ENCODE measurements at regions of chr3 and their contacts with region 1.

Region 1: DNA sequence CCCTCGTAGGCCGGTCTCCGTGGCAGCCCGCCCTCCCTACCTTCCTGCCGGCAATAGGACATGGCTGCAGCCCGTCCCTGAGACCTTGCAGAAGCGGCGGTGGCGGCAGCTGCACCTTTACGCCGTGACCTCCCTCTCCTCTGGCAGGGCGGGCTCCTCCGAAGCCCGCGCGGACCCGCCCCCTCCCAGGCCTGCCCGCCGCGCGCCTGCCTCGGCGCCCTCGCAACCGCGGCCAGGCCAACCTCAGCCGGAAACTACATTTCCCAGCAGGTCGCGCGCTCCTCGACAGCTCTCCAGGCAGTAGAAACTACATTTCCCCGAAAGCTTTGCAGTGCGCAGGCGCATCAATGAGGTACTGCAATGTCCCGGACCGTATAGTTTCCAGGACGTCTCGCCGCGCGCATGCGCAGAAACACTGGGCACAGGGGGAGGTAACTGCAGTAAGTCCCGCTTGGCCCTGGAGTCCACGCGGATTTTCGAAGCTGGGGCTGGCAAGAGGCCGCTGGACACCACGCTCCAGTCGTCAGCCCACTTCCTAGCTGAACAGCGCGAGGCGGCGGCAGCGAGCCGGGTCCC is at the starts of genes CHCHD4 and TMEM43:
- DNase-seq: peak; percentile 99
- H3K4me3 Mint-ChIP-seq: peak within 1 kb of the TSS; percentile 86
- H3K27ac Mint-ChIP-seq: peak within 1 kb of the TSS; percentile 86
- H3K4me1 Mint-ChIP-seq: peaks cover 51% of the 10 kb centered on the region
- H3K27me3 Mint-ChIP-seq: no peaks in the 10 kb centered on the region
- total RNA-seq, gene CHCHD4: 17.5 to 19.2 TPM
- total RNA-seq, gene TMEM43: 31.0 to 32.4 TPM

Region 2: DNA sequence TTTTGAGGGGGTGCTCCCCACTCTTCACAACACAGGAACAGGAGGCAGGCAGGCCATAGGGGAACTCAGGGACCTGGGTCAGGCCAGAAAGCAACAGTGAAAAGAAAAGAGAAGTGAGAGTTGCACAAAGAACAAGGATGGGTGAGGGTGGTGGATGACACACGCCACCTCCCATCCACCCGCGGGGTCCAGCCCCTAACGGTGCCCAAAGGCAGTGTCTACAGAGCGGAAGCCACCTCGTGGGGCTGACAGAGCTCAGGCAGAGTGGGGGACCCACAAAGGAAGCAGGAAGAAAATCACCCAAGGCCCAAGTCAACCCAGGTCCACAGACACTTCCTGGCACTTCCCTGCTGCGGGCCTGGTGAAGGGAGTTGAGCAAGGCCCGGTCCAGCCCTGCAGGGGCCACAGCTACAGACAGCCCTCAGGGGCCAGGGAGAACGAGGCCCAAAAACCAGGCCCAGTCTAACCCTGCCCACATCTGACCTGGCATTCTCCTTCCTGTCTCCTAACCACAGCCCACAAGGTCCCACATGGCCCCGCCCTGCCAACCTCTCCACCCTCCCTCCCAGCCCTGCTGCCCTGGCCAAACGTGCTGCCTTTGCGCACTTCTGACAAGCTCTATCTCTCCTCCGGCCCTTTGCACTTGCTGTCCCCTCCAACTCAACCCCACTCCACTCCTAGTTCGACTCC is 710.5 kb before region 1 on chr3:
- CTCF ChIA-PET with region 1: no interaction called
- POLR2A ChIA-PET with region 1: no interaction called
- intact Hi-C with region 1: loop called (anchors 1 kb)
- DNase-seq: peak; percentile 85
- H3K4me3 Mint-ChIP-seq: peak overlapping the region; percentile 67
- H3K27ac Mint-ChIP-seq: peak overlapping the region; percentile 90
- H3K4me1 Mint-ChIP-seq: peaks cover 54% of the 10 kb centered on the region
- H3K27me3 Mint-ChIP-seq: no peaks in the 10 kb centered on the region

Region 3: GRCh38 chr3:14082108-14082657 is 42.5 kb before region 1 on chr3:
- CTCF ChIA-PET with region 1: no interaction called
- POLR2A ChIA-PET with region 1: interaction called, 5 read pairs
- intact Hi-C with region 1: loop called (anchors 1 kb)
- DNase-seq: peak; percentile 45
- H3K4me3 Mint-ChIP-seq: no peak overlapping the region
- H3K27ac Mint-ChIP-seq: peak overlapping the region; percentile 23
- H3K4me1 Mint-ChIP-seq: peaks cover 11% of the 10 kb centered on the region
- H3K27me3 Mint-ChIP-seq: peaks cover 11% of the 10 kb centered on the region

Region 4: DNA sequence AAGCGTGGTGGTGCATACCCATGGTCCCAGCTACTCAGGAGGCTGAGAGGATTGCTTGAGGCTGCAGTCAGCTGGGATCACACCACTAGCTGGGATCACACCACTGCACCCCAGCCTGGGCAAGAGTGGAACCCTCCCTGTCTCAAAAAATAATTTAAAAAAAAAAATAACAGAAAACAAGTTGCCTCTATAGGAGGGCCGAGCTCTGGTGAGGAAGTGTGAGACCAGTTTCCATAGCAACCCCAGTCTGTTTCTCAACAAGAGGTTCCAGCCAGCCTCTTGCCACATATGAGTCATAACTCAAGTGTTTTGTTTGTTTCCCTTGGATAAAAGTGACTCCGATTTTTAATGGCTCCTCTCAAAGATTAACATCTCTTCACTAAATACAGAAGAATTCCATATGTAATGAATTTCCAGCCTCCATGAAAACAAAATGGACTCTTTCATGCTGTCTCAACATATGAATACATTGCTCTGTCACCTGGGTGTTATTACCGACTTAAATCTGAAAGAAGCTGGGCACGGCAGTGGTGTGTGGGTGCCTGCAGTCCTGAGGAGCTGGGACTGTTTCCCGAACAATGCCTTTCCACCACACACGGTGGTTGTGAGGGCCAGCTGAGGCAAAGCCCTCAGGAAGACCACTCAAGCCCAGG is 19.8 kb after region 1 on chr3:
- CTCF ChIA-PET with region 1: interaction called, 21 read pairs
- POLR2A ChIA-PET with region 1: interaction called, 52 read pairs
- intact Hi-C with region 1: loop called (anchors 1 kb)
- DNase-seq: peak; percentile 74
- H3K4me3 Mint-ChIP-seq: peak overlapping the region; percentile 1
- H3K27ac Mint-ChIP-seq: peak overlapping the region; percentile 79
- H3K4me1 Mint-ChIP-seq: peaks cover 57% of the 10 kb centered on the region
- H3K27me3 Mint-ChIP-seq: no peaks in the 10 kb centered on the region

Region 5: DNA sequence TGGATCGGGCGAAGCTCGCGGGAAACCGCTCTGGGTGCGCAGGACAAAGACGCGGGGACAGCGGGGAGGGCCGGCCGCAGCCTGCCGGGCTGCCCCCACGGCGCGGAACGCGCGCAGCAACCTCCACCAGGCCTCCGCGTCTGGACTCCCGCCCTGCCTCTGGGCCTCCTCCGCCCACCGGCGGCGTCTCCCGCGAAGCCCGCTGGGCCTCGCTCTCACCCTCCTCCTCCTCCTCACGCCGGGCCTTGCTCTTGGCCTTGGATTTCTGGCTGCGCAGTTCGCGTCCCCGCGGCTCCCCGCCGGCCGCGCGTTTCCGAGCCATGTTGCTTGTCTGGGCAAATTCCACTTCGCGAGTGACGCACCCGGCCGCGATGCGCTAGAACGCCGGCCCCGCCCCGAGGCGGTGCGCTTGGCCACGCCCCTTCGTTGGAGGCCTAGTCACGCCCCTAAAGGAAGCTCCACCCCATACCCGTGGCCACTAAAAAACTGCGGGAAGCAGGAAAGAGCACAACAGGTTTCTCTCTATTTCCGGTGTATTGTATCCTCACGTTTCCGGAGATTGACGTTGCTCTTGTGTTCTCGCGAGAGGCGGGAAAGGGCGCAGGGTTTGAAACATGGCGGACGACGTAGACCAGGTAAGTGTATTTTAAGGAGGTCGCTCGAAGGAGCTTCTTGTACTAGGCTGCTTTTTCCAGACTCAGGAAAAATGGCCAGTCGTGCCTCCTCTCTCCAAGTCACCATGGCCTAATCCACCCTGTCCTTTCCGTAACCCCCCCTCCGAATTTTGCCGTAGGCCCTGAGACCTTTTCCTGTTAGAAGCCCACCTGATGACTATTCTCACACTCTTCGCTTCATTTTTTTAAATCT is 53.8 kb after region 1 on chr3 and contains the starts of genes LSM3 and XPC:
- CTCF ChIA-PET with region 1: interaction called, 15 read pairs
- POLR2A ChIA-PET with region 1: interaction called, 49 read pairs
- intact Hi-C with region 1: loop called (anchors 1 kb)
- DNase-seq: peak; percentile 98
- H3K4me3 Mint-ChIP-seq: peak within 1 kb of the TSS; percentile 87
- H3K27ac Mint-ChIP-seq: peak within 1 kb of the TSS; percentile 89
- H3K4me1 Mint-ChIP-seq: peaks cover 63% of the 10 kb centered on the region
- H3K27me3 Mint-ChIP-seq: no peaks in the 10 kb centered on the region
- total RNA-seq, gene LSM3: 22.1 to 22.9 TPM
- total RNA-seq, gene XPC: 27.8 to 31.6 TPM

Region 6: DNA sequence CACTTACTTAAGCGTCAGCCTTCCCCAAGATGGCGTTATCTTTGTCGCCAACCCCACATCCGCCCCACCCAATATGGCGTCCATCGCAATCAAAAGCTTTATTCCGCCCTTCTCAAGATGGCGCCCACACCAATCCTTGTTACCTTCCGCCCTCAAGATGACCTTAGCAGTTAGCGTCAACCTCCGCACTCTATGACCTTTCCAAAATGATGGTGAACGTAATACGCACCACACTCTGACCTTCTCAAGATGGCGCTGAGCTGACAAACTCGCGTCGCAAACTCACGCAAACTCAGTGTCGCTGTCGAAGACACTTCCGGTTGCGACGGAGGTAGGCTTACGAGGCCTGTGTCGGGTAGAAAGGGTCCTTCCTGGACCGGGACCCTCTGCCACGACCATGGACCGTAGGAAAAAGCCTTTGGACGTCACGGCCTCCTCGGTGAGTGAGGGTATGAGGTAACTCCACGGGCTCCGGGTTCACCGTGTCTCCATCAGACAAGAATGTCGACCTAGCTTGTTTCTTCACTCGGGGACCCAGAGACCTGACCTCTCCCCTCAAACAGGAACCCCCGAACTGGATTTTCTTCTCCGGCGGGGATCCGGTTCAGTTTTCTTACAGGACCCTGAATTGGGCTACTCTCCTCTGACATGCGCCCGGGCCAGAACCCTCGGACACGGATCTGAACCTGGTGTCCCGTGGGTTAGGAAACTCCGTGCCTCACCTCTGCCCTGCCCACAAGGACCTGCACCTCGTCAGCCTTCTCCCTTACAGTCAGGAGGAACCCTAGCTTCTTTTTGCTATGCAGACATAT is 526.9 kb after region 1 on chr3 and contains the start of gene CCDC174:
- CTCF ChIA-PET with region 1: no interaction called
- POLR2A ChIA-PET with region 1: no interaction called
- intact Hi-C with region 1: loop called (anchors 1 kb)
- DNase-seq: peak; percentile 97
- H3K4me3 Mint-ChIP-seq: peak within 1 kb of the TSS; percentile 89
- H3K27ac Mint-ChIP-seq: peak within 1 kb of the TSS; percentile 98
- H3K4me1 Mint-ChIP-seq: peaks cover 35% of the 10 kb centered on the region
- H3K27me3 Mint-ChIP-seq: no peaks in the 10 kb centered on the region
- total RNA-seq, gene CCDC174: 16.6 to 18.6 TPM